B cell (primary cell): ENCODE measurements at regions of chr3 and their contacts with region 1.

Region 1: DNA sequence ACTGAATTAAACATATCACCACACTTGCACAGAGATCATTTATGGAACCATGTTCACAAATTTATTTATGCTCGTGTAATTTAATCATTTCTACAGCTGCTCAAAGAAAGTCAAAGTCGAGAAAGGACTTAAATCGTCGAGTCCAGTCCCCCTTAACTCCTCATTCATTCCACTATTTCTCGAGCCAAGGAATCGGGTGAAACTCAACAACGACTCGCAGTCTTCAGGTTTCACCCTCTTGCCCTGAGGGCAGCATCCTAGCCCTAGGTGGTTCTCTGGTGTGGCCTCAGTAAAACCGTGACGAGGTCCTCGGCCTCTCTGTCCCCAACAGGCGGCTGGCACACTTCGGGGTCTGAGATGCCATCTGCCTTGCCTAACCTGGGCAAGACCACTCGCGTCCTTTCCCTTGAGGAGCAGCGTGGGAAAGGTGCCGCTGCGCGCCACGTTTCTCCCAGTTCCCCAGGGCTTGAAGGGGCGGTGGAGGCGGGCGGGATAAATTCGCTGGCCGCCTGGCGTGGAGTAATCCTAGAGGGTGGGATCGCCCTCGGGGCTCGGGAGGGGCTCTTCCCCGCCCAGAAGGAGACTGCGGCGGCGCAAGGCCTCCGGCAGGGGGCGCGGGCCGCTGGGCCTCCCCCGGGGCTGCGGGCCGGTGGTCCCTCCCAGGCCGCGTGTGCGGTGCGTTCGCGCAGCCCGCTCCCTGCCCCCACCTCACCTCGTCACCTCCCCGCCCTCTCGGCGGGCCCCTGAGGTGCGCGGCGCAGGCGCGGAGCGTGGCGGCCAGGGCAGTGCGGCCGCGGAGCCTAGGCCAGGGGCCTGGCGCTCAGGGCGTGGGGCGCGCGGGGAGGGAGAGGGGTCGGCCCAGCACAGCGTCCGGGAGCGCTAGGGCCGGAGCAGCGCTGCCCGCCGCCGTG is at the start of gene ZNF639:
- DNase-seq: peak; percentile 93
- ATAC-seq: peak; percentile 84
- H3K4me3 ChIP-seq: peak within 1 kb of the TSS; percentile 85 to 97 (median 92)
- H3K4me3 Mint-ChIP-seq: peak within 1 kb of the TSS; percentile 96
- H3K27ac ChIP-seq: peak within 1 kb of the TSS; percentile 89 to 99
- H3K27ac Mint-ChIP-seq: peak within 1 kb of the TSS; percentile 95
- H3K4me1 ChIP-seq: peaks cover 25% of the 10 kb centered on the region in 2 donors
- H3K4me1 Mint-ChIP-seq: peaks cover 30% of the 10 kb centered on the region
- H3K27me3 ChIP-seq: no peaks in the 10 kb centered on the region
- H3K27me3 Mint-ChIP-seq: no peaks in the 10 kb centered on the region
- CTCF ChIP-seq: peak; percentile 87
- total RNA-seq, gene ZNF639: 39.8 and 43.1 TPM in 2 replicates

Region 2: GRCh38 chr3:178732820-178733219 is 589.7 kb before region 1 on chr3:
- CTCF ChIA-PET with region 1: no interaction called
- POLR2A ChIA-PET with region 1: no interaction called
- intact Hi-C with region 1: no loop called
- DNase-seq: no peak
- ATAC-seq: no peak
- H3K4me3 ChIP-seq: no peak overlapping the region
- H3K4me3 Mint-ChIP-seq: no peak overlapping the region
- H3K27ac ChIP-seq: no peak overlapping the region
- H3K27ac Mint-ChIP-seq: no peak overlapping the region
- H3K4me1 ChIP-seq: no peaks in the 10 kb centered on the region
- H3K4me1 Mint-ChIP-seq: no peaks in the 10 kb centered on the region
- H3K27me3 ChIP-seq: no peaks in the 10 kb centered on the region
- H3K27me3 Mint-ChIP-seq: no peaks in the 10 kb centered on the region
- CTCF ChIP-seq: no peak

Region 3: GRCh38 chr3:179071550-179072397 is 250.8 kb before region 1 on chr3 and contains the start of gene ZMAT3:
- CTCF ChIA-PET with region 1: interaction called, 23 read pairs
- POLR2A ChIA-PET with region 1: no interaction called
- intact Hi-C with region 1: loop called (anchors 2 kb)
- DNase-seq: peak; percentile 90
- ATAC-seq: peak; percentile 79
- H3K4me3 ChIP-seq: peak within 1 kb of the TSS; percentile 61 to 85 (median 80)
- H3K4me3 Mint-ChIP-seq: peak within 1 kb of the TSS; percentile 100
- H3K27ac ChIP-seq: peak within 1 kb of the TSS; percentile 89 to 92
- H3K27ac Mint-ChIP-seq: peak within 1 kb of the TSS; percentile 96
- H3K4me1 ChIP-seq: peaks cover 36 to 41% of the 10 kb centered on the region in 2 donors
- H3K4me1 Mint-ChIP-seq: peaks cover 63% of the 10 kb centered on the region
- H3K27me3 ChIP-seq: no peaks in the 10 kb centered on the region
- H3K27me3 Mint-ChIP-seq: no peaks in the 10 kb centered on the region
- CTCF ChIP-seq: no peak
- total RNA-seq, gene ZMAT3: 17.5 and 19.5 TPM in 2 replicates

Region 4: DNA sequence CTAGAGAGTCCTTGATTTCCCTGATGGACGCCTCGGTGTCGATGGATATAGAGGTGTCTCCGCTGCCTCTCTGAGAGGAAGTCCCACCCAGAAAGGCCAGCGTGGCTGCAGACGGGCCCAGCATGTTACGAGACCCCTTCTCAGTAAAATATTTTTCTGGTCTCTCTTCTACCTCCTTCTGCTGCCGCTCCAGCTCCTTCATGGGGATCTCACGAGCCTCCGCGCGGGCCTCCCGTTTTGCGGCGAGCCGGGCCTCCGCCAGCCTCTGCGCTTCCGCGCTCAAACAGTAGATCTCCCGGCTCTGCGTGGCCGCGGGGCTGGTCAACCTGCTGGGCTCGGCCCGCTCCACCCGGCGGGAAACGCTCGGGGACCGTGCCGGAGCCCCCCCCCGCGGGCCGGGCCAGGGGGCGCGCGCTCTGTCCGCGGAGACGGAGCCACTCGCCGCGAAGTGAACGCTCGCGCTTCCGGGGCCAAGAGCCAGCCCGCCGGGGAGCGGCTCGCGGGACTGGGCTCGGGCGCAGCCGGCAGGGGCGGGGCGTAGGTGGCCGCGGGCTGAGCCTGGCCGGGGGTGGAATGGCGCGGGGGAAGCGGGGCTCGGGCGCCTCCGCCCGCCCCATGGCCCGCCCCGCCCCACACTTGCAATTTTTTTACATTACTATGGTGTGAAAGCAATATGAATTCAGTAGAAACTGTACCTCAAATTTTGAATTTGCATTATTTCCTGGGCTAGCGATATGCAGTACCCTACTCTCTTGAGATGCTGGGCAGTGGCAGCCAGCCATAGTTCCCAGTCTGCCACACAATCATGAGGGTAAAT is 61.4 kb before region 1 on chr3:
- CTCF ChIA-PET with region 1: interaction called, 7 read pairs
- POLR2A ChIA-PET with region 1: no interaction called
- intact Hi-C with region 1: loop called (anchors 2 kb)
- DNase-seq: peak; percentile 78
- ATAC-seq: peak; percentile 92
- H3K4me3 ChIP-seq: peak overlapping the region; percentile 48 to 77 (median 67)
- H3K4me3 Mint-ChIP-seq: peak overlapping the region; percentile 89
- H3K27ac ChIP-seq: peak overlapping the region in 1 of 2 donors; percentile 66
- H3K27ac Mint-ChIP-seq: peak overlapping the region; percentile 84
- H3K4me1 ChIP-seq: peaks cover 15 to 23% of the 10 kb centered on the region in 2 donors
- H3K4me1 Mint-ChIP-seq: peaks cover 52% of the 10 kb centered on the region
- H3K27me3 ChIP-seq: no peaks in the 10 kb centered on the region
- H3K27me3 Mint-ChIP-seq: no peaks in the 10 kb centered on the region
- CTCF ChIP-seq: no peak

Region 5: GRCh38 chr3:179347345-179348194 is 25.0 kb after region 1 on chr3 and contains the start of gene MFN1:
- CTCF ChIA-PET with region 1: interaction called, 9 read pairs
- POLR2A ChIA-PET with region 1: interaction called, 4 read pairs
- intact Hi-C with region 1: loop called (anchors 1 kb)
- DNase-seq: peak; percentile 92
- ATAC-seq: peak; percentile 88
- H3K4me3 ChIP-seq: peak within 1 kb of the TSS; percentile 83 to 99 (median 98)
- H3K4me3 Mint-ChIP-seq: peak within 1 kb of the TSS; percentile 95
- H3K27ac ChIP-seq: peak within 1 kb of the TSS; percentile 71 to 86
- H3K27ac Mint-ChIP-seq: peak within 1 kb of the TSS; percentile 93
- H3K4me1 ChIP-seq: peaks cover 17 to 32% of the 10 kb centered on the region in 2 donors
- H3K4me1 Mint-ChIP-seq: peaks cover 28% of the 10 kb centered on the region
- H3K27me3 ChIP-seq: no peaks in the 10 kb centered on the region
- H3K27me3 Mint-ChIP-seq: no peaks in the 10 kb centered on the region
- CTCF ChIP-seq: no peak
- total RNA-seq, gene MFN1: 98.9 and 108 TPM in 2 replicates

Region 6: DNA sequence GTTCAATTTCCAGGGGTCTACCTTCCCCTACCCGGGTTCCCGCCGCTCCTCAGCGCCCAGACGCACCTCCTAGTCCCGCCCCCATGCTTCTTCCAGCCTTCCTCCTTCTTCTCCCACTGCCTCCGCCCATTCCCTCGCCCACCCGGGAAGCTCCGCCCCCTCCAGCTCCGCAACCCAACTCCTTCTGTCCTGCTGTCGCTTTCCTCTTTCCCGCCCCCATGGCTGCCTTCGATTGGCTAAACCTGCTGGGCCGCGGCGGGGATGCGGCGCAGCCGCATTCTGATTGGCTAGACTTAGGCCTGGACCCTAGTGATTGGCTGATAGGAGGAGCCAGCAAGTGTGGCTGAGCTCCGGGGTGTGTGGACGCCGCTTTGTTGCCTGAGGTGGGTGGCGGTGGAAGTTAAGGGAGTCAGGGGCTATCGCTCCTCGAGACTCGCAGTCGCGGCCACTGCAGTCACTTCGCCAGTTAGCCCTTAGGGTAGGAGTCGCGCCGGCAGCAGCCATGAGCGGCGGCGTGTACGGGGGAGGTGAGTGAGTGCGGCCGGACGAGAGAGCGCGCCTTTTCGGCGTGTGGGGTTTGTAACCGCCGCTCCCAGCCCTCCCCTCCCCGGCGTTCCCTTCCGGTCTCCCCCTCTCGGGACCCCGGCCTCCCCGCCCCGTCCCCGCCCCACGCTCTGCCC is 240.2 kb after region 1 on chr3 and contains the start of gene ACTL6A:
- CTCF ChIA-PET with region 1: interaction called, 14 read pairs
- POLR2A ChIA-PET with region 1: interaction called, 3 read pairs
- intact Hi-C with region 1: loop called (anchors 1 kb)
- DNase-seq: peak; percentile 98
- ATAC-seq: peak; percentile 90
- H3K4me3 ChIP-seq: peak within 1 kb of the TSS; percentile 55 to 87 (median 83)
- H3K4me3 Mint-ChIP-seq: peak within 1 kb of the TSS; percentile 98
- H3K27ac ChIP-seq: peak within 1 kb of the TSS; percentile 58 to 73
- H3K27ac Mint-ChIP-seq: peak within 1 kb of the TSS; percentile 94
- H3K4me1 ChIP-seq: peaks cover 9% of the 10 kb centered on the region in 2 donors
- H3K4me1 Mint-ChIP-seq: peaks cover 26% of the 10 kb centered on the region
- H3K27me3 ChIP-seq: no peaks in the 10 kb centered on the region
- H3K27me3 Mint-ChIP-seq: no peaks in the 10 kb centered on the region
- CTCF ChIP-seq: no peak
- total RNA-seq, gene ACTL6A: 48.5 and 55.1 TPM in 2 replicates